Naive thymus-derived CD4-positive, alpha-beta T cell (primary cell): ENCODE measurements at regions of chr21 and their contacts with region 1.

Region 1: DNA sequence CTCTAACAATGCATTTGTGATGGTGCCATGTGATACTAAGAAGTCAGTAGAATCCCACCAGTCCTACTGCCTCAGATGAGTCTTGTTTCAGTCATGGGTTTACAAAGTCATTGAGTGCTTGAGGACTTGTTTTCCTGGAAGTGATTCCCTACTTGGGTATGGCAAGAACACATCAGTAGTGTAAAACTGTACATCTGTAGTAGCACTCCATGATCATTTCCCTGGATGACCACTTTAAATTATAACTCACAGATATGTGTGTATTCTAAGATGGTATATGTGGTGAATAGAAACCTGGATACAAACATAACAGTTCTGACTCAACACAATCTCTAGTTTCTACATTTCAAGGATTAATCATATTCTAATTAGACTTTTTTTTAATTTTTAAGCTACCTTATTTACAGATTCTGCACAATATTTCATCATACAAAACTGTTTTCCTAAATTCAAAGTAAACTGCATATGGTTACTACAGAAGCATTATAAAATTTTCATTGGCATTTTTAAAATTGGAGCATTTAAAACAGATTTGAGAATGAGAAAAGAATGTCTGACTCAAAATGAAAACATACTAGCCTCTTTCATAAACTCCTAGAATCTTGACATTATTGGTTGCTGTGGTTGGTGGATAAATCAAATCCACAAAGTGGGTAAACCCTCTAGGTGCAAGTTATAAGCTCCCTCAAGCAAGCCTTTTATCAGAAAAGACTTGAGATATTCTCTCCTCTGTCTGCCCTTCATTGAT is 6.8 kb upstream of the PSMG1 start:
- DNase-seq: no peak
- ATAC-seq: no peak
- H3K4me3 ChIP-seq: no peak overlapping the region
- H3K4me3 Mint-ChIP-seq: peak overlapping the region in 1 of 10 donors; percentile 19
- H3K27ac ChIP-seq: no peak overlapping the region
- H3K27ac Mint-ChIP-seq: peak overlapping the region in 3 of 9 donors; percentile 20 to 64 (median 23)
- H3K4me1 ChIP-seq: no peaks in the 10 kb centered on the region
- H3K4me1 Mint-ChIP-seq: peaks cover 2 to 54% (median 26%) of the 10 kb centered on the region in 7 donors
- H3K27me3 ChIP-seq: no peaks in the 10 kb centered on the region
- H3K27me3 Mint-ChIP-seq: no peaks in the 10 kb centered on the region

Region 2: GRCh38 chr21:39153373-39153772 is 36.7 kb before region 1 on chr21:
- CTCF ChIA-PET with region 1: no interaction called
- POLR2A ChIA-PET with region 1: no interaction called
- intact Hi-C with region 1: no loop called
- DNase-seq: no peak
- ATAC-seq: no peak
- H3K4me3 ChIP-seq: no peak overlapping the region
- H3K4me3 Mint-ChIP-seq: no peak overlapping the region
- H3K27ac ChIP-seq: no peak overlapping the region
- H3K27ac Mint-ChIP-seq: no peak overlapping the region
- H3K4me1 ChIP-seq: no peaks in the 10 kb centered on the region
- H3K4me1 Mint-ChIP-seq: no peaks in the 10 kb centered on the region
- H3K27me3 ChIP-seq: no peaks in the 10 kb centered on the region
- H3K27me3 Mint-ChIP-seq: peaks cover 0 to 11% (median 4%) of the 10 kb centered on the region in 5 donors

Region 3: DNA sequence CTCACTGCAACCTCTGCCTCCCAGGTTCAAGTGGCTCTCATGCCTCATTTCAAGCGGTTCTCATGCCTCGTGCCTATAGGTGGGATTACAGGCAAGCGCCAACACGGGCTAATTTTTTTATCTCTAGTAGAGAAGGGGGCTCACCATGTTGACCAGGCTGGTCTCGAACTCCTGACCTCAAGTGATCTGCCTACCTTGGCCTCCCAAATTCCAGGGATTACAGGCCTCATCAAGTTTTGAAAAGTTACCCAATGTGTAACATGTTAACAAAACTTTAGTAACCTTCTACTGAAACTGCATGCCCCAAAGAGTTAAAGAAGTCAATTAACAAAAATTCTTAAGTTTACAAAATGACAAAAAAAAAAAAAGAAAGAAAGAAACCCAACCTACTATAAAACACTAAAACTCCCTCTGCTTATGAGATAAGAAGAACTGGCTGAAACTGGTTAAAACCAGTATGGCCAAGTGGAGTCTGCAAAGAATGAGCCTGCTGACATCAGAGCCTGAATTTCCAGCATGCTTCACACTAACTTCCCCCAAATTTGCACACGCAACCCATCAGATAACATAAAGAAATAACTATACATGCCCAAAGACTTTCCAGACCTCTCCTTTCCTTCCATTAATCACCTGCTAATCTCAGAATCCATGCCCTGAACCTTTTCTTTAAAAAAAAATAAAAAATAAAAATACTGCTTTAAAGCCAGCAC is 18.7 kb after region 1 on chr21:
- CTCF ChIA-PET with region 1: no interaction called
- POLR2A ChIA-PET with region 1: interaction called, 4 read pairs
- intact Hi-C with region 1: loop called in 1 of 2 experiments (anchors 2 kb)
- DNase-seq: peak in 3 of 9 donors; percentile 21 to 27 (median 24)
- ATAC-seq: no peak
- H3K4me3 ChIP-seq: no peak overlapping the region
- H3K4me3 Mint-ChIP-seq: peak overlapping the region in 6 of 10 donors; percentile 10 to 57 (median 36)
- H3K27ac ChIP-seq: no peak overlapping the region
- H3K27ac Mint-ChIP-seq: peak overlapping the region; percentile 36 to 87 (median 64)
- H3K4me1 ChIP-seq: peaks cover 0 to 5% of the 10 kb centered on the region in 2 donors
- H3K4me1 Mint-ChIP-seq: peaks cover 8 to 51% (median 42%) of the 10 kb centered on the region in 7 donors
- H3K27me3 ChIP-seq: no peaks in the 10 kb centered on the region
- H3K27me3 Mint-ChIP-seq: no peaks in the 10 kb centered on the region

Region 4: GRCh38 chr21:39281207-39281606 is 91.2 kb after region 1 on chr21:
- CTCF ChIA-PET with region 1: no interaction called
- POLR2A ChIA-PET with region 1: no interaction called
- intact Hi-C with region 1: loop called in 1 of 2 experiments (anchors 5 kb)
- DNase-seq: no peak
- ATAC-seq: no peak
- H3K4me3 ChIP-seq: no peak overlapping the region
- H3K4me3 Mint-ChIP-seq: no peak overlapping the region
- H3K27ac ChIP-seq: no peak overlapping the region
- H3K27ac Mint-ChIP-seq: peak overlapping the region in 5 of 9 donors; percentile 2 to 52 (median 28)
- H3K4me1 ChIP-seq: no peaks in the 10 kb centered on the region
- H3K4me1 Mint-ChIP-seq: peaks cover 5 to 25% (median 21%) of the 10 kb centered on the region in 7 donors
- H3K27me3 ChIP-seq: no peaks in the 10 kb centered on the region
- H3K27me3 Mint-ChIP-seq: no peaks in the 10 kb centered on the region